Esophagus muscularis mucosa (tissue), 4 donors: ENCODE measurements at regions of chr13 and their contacts with region 1.

Region 1: GRCh38 chr13:106917673-106918556 is 350.0 kb upstream of the ARGLU1 start:
- DNase-seq: peak; percentile 94
- H3K4me3 ChIP-seq: peak overlapping the region; percentile 55 to 76 (median 64)
- H3K27ac ChIP-seq: peak overlapping the region; percentile 83 to 88 (median 85)
- H3K4me1 ChIP-seq: peaks cover 0 to 33% (median 24%) of the 10 kb centered on the region in 4 donors
- H3K27me3 ChIP-seq: no peaks in the 10 kb centered on the region
- CTCF ChIP-seq: peak; percentile 87 to 99 (median 98)
- EP300 ChIP-seq: no peak
- POLR2A ChIP-seq: no peak

Region 2: DNA sequence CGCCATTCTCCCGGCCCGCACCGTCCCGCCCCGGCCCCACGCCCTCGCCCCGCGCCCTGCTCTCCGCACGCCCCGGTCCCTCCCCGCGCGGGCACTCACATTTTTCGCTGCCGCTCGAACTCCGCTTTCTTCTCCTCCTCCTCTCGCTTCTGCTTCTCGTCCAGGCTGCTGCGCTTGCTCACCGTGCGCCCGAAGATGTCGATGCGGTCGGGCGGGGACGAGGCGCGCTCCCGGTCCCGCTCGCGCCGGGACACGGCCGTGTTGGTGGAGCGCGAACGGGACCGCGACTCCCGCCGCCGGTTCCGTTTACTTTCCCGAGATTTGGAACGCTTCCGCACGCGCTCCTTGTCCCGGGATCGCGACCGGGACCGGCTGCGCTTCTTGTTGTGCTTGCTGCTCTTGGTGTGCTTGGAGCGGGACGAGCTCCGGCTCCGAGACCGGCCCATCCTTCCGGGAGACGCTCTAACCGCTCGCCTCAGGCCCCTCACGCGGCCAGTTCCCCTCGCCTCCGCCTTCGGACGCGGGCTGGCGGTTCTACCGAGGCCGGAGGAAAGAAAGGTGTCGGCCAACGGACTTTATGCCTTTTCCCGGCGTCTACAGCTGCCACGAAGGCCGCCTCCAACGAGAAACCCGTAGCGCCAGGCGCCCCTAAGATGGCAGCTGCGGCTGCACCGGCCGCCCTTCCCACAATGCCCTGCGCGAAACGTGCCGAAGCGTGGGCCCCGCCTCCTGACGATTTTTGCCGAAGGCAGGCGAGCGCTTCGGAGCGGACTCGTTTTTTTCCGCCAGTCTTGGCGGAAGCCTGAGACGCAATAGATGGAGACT is 350.2 kb before region 1 on chr13 and contains the start of gene ARGLU1:
- intact Hi-C with region 1: loop called (anchors 10 kb)
- DNase-seq: peak; percentile 97
- H3K4me3 ChIP-seq: peak within 1 kb of the TSS; percentile 85 to 98 (median 92)
- H3K27ac ChIP-seq: peak within 1 kb of the TSS; percentile 90 to 99 (median 98)
- H3K4me1 ChIP-seq: peaks cover 38 to 55% (median 47%) of the 10 kb centered on the region in 4 donors
- H3K27me3 ChIP-seq: no peaks in the 10 kb centered on the region
- CTCF ChIP-seq: no peak
- EP300 ChIP-seq: no peak
- POLR2A ChIP-seq: peak; percentile 94
- total RNA-seq, gene ARGLU1: 46.7 to 77.2 (median 62.6) TPM

Region 3: DNA sequence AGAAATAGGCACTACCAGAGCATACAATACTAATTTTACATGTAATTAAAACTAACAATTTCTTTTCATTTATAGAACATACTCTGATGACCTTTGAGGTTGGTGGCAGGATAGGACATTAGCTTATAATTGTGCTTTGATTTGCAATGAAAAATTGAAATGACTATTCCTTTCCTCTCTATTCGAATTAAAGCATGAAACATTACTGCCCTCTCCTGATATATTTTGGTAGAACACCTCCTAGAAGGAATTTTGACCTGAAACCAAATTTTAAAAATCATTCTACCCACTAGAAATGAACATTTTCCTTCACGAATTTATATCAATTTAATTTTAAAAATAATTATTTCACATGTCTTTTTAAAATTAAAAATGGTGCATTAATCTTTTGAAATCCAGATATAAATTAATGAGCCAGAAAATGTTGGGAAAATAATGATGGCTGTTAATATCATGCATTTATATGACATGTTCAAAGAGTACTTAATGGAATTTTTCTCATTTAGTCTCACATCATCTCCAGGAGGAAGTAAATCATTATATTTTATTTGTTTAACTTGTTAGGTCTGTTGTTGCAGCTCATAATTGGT is 206.3 kb after region 1 on chr13:
- intact Hi-C with region 1: loop called (anchors 5 kb)
- DNase-seq: no peak
- H3K4me3 ChIP-seq: no peak overlapping the region
- H3K27ac ChIP-seq: no peak overlapping the region
- H3K4me1 ChIP-seq: no peaks in the 10 kb centered on the region
- H3K27me3 ChIP-seq: no peaks in the 10 kb centered on the region
- CTCF ChIP-seq: peak; percentile 52 to 74 (median 65)
- EP300 ChIP-seq: no peak
- POLR2A ChIP-seq: no peak